ENCODE measurements at regions of chr4 and their contacts with region 1.

Region 1: GRCh38 chr4:98658287-98659105 is at the start of gene TSPAN5:
- DNase-seq: peak; percentile 83
- ATAC-seq: peak; percentile 65
- H3K4me3 Mint-ChIP-seq: peak within 1 kb of the TSS; percentile 94
- H3K27ac Mint-ChIP-seq: peak within 1 kb of the TSS; percentile 81
- H3K4me1 Mint-ChIP-seq: peaks cover 75% of the 10 kb centered on the region
- H3K27me3 Mint-ChIP-seq: no peaks in the 10 kb centered on the region
- CTCF ChIP-seq: no peak
- total RNA-seq, gene TSPAN5: 18.5 to 21.9 TPM

Region 2: GRCh38 chr4:98260579-98261290 is 397.8 kb before region 1 on chr4:
- CTCF ChIA-PET with region 1: no interaction called
- POLR2A ChIA-PET with region 1: no interaction called
- intact Hi-C with region 1: loop called (anchors 10 kb)
- DNase-seq: peak; percentile 96
- ATAC-seq: peak; percentile 91
- H3K4me3 Mint-ChIP-seq: peak overlapping the region; percentile 85
- H3K27ac Mint-ChIP-seq: peak overlapping the region; percentile 96
- H3K4me1 Mint-ChIP-seq: peaks cover 35% of the 10 kb centered on the region
- H3K27me3 Mint-ChIP-seq: no peaks in the 10 kb centered on the region
- CTCF ChIP-seq: no peak

Region 3: GRCh38 chr4:98467627-98468072 is 190.8 kb before region 1 on chr4:
- CTCF ChIA-PET with region 1: interaction called, 10 read pairs
- POLR2A ChIA-PET with region 1: no interaction called
- intact Hi-C with region 1: loop called (anchors 5 kb)
- DNase-seq: peak; percentile 83
- ATAC-seq: peak; percentile 95
- H3K4me3 Mint-ChIP-seq: peak overlapping the region; percentile 66
- H3K27ac Mint-ChIP-seq: no peak overlapping the region
- H3K4me1 Mint-ChIP-seq: peaks cover 27% of the 10 kb centered on the region
- H3K27me3 Mint-ChIP-seq: no peaks in the 10 kb centered on the region
- CTCF ChIP-seq: peak; percentile 65

Region 4: GRCh38 chr4:98482847-98483806 is 175.4 kb before region 1 on chr4:
- CTCF ChIA-PET with region 1: interaction called, 4 read pairs
- POLR2A ChIA-PET with region 1: interaction called, 5 read pairs
- intact Hi-C with region 1: loop called (anchors 1 kb)
- DNase-seq: peak; percentile 80
- ATAC-seq: peak; percentile 87
- H3K4me3 Mint-ChIP-seq: peak overlapping the region; percentile 51
- H3K27ac Mint-ChIP-seq: peak overlapping the region; percentile 98
- H3K4me1 Mint-ChIP-seq: peaks cover 76% of the 10 kb centered on the region
- H3K27me3 Mint-ChIP-seq: no peaks in the 10 kb centered on the region
- CTCF ChIP-seq: no peak

Region 5: GRCh38 chr4:98601708-98602107 is 56.8 kb before region 1 on chr4:
- CTCF ChIA-PET with region 1: interaction called, 4 read pairs
- POLR2A ChIA-PET with region 1: interaction called, 6 read pairs
- intact Hi-C with region 1: loop called (anchors 5 kb)
- DNase-seq: peak; percentile 55
- ATAC-seq: peak; percentile 88
- H3K4me3 Mint-ChIP-seq: peak overlapping the region; percentile 34
- H3K27ac Mint-ChIP-seq: peak overlapping the region; percentile 86
- H3K4me1 Mint-ChIP-seq: peaks cover 42% of the 10 kb centered on the region
- H3K27me3 Mint-ChIP-seq: no peaks in the 10 kb centered on the region
- CTCF ChIP-seq: no peak

Region 6: DNA sequence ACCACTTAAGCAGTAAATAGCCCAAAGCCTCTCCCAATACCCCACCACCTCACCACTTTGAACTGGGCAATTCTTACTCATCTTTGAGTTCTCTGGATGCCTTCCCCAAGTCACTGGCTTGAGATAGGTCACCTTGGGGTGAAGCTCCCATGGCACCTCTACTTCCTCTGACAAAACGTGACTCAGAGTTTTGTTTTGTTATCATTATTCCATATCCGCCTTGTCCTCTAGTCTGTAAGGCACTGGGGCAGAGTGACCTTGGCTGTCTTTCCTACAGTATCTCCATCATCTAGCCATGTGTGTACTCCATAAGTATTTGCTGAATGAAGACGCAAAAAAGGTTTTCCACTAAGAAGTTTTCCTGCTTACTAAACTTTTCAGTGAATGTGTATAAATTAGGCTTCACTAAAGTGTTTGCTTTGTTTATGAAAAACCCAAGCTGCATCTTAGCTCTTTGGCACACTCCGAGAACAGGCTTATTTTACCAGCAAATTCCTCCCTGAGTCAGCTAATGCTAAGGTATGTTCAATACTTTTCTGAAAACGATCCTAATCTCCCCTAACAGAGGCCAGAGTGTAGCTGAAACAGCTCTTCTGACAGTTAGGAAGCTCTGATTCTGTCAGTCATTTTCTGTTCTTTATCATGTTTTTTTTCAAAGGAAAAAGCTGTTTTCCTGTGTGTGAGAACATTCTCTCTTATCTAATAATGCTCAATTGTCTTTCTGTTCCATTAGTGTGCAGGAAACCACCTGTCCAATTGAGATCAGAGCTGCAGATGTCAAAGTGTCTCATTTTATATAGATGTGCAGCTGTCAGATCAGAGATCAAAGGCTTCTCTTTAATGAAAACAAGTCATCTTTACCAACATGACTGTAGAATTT is 30.2 kb after region 1 on chr4:
- CTCF ChIA-PET with region 1: interaction called, 10 read pairs
- POLR2A ChIA-PET with region 1: interaction called, 4 read pairs
- intact Hi-C with region 1: no loop called
- DNase-seq: peak; percentile 37
- ATAC-seq: peak; percentile 72
- H3K4me3 Mint-ChIP-seq: no peak overlapping the region
- H3K27ac Mint-ChIP-seq: peak overlapping the region; percentile 60
- H3K4me1 Mint-ChIP-seq: peaks cover 33% of the 10 kb centered on the region
- H3K27me3 Mint-ChIP-seq: no peaks in the 10 kb centered on the region
- CTCF ChIP-seq: no peak

Region 7: GRCh38 chr4:98928505-98929340 is 270.2 kb after region 1 on chr4 and contains the start of gene EIF4E:
- CTCF ChIA-PET with region 1: interaction called, 4 read pairs
- POLR2A ChIA-PET with region 1: interaction called, 5 read pairs
- intact Hi-C with region 1: loop called (anchors 5 kb)
- DNase-seq: peak; percentile 98
- ATAC-seq: peak; percentile 78
- H3K4me3 Mint-ChIP-seq: peak within 1 kb of the TSS; percentile 88
- H3K27ac Mint-ChIP-seq: peak within 1 kb of the TSS; percentile 95
- H3K4me1 Mint-ChIP-seq: peaks cover 36% of the 10 kb centered on the region
- H3K27me3 Mint-ChIP-seq: no peaks in the 10 kb centered on the region
- CTCF ChIP-seq: peak; percentile 48
- total RNA-seq, gene EIF4E: 118 to 121 TPM

Measured in activated CD8-positive, alpha-beta T cell treated with anti-CD3 and anti-CD28 coated beads for 36 hours (primary cell).